ENCODE measurements at regions of chr6 and their contacts with region 1.

Region 1: GRCh38 chr6:116279260-116280063 is at the start of gene TSPYL1:
- DNase-seq: peak; percentile 90 to 97 (median 92)
- ATAC-seq: peak; percentile 85
- H3K4me3 ChIP-seq: peak within 1 kb of the TSS; percentile 93
- H3K27ac ChIP-seq: peak within 1 kb of the TSS; percentile 95
- H3K4me1 ChIP-seq: peaks cover 9 to 20% of the 10 kb centered on the region in 2 experiments; a peak in 3 of 5 replicates
- H3K27me3 ChIP-seq: no peaks in the 10 kb centered on the region
- CTCF ChIP-seq: peak in 1 of 3 experiments; percentile 27; a peak in 2 of 6 replicates
- EP300 ChIP-seq: no peak; the same call in 1 of the 2 replicates
- POLR2A ChIP-seq: peak; percentile 95
- RAD21 ChIP-seq: no peak
- polyA plus RNA-seq, gene TSPYL1: 26.1 to 37.9 TPM

Region 2: GRCh38 chr6:116115781-116116180 is 163.7 kb before region 1 on chr6:
- CTCF ChIA-PET with region 1: no interaction called
- POLR2A ChIA-PET with region 1: no interaction called
- in situ Hi-C with region 1: no loop called
- intact Hi-C with region 1: loop called (anchors 5 kb)
- DNase-seq: peak in 1 of 4 experiments; percentile 9
- ATAC-seq: no peak
- H3K4me3 ChIP-seq: no peak overlapping the region
- H3K27ac ChIP-seq: no peak overlapping the region
- H3K4me1 ChIP-seq: no peaks in the 10 kb centered on the region
- H3K27me3 ChIP-seq: no peaks in the 10 kb centered on the region
- CTCF ChIP-seq: peak in 2 of 3 experiments; percentile 9 to 53; a peak in 3 of 6 replicates
- EP300 ChIP-seq: no peak
- POLR2A ChIP-seq: no peak
- RAD21 ChIP-seq: no peak

Region 3: DNA sequence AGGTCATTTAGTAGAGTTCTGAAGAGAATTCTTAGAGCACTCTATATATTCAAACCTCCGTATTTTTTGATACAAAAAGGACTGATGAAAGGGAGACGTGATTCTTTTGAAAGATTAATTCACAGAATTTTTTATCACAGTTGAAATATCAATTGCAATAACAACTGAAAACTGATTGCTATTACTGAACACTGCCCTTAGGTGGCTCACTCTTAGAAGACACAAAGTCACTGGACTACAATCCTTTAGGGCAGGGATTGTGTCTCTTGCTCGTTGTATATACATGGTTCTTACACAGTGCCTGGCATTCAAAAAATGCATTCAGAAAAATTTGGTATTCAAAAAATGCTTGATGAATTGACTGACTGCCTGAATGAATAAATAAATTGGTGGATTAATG is 164.6 kb after region 1 on chr6:
- CTCF ChIA-PET with region 1: no interaction called
- POLR2A ChIA-PET with region 1: no interaction called
- in situ Hi-C with region 1: no loop called
- intact Hi-C with region 1: loop called (anchors 5 kb)
- DNase-seq: peak; percentile 24 to 45 (median 34)
- ATAC-seq: peak; percentile 86
- H3K4me3 ChIP-seq: no peak overlapping the region
- H3K27ac ChIP-seq: no peak overlapping the region
- H3K4me1 ChIP-seq: no peaks in the 10 kb centered on the region; a peak in 1 of 5 replicates
- H3K27me3 ChIP-seq: no peaks in the 10 kb centered on the region
- CTCF ChIP-seq: peak; percentile 43 to 65 (median 46); a peak in 5 of 6 replicates
- EP300 ChIP-seq: no peak
- POLR2A ChIP-seq: no peak
- RAD21 ChIP-seq: peak; percentile 50 to 71

Region 4: GRCh38 chr6:116561377-116562018 is 282.0 kb after region 1 on chr6:
- CTCF ChIA-PET with region 1: no interaction called
- POLR2A ChIA-PET with region 1: no interaction called
- in situ Hi-C with region 1: loop called (anchors 10 kb)
- intact Hi-C with region 1: no loop called
- DNase-seq: peak; percentile 62 to 84 (median 67)
- ATAC-seq: peak; percentile 82
- H3K4me3 ChIP-seq: no peak overlapping the region
- H3K27ac ChIP-seq: no peak overlapping the region
- H3K4me1 ChIP-seq: peaks cover 15 to 17% of the 10 kb centered on the region in 2 experiments; a peak in 4 of 5 replicates
- H3K27me3 ChIP-seq: no peaks in the 10 kb centered on the region
- CTCF ChIP-seq: peak; percentile 76 to 88 (median 84)
- EP300 ChIP-seq: no peak
- POLR2A ChIP-seq: no peak
- RAD21 ChIP-seq: peak; percentile 81 to 85

Region 5: DNA sequence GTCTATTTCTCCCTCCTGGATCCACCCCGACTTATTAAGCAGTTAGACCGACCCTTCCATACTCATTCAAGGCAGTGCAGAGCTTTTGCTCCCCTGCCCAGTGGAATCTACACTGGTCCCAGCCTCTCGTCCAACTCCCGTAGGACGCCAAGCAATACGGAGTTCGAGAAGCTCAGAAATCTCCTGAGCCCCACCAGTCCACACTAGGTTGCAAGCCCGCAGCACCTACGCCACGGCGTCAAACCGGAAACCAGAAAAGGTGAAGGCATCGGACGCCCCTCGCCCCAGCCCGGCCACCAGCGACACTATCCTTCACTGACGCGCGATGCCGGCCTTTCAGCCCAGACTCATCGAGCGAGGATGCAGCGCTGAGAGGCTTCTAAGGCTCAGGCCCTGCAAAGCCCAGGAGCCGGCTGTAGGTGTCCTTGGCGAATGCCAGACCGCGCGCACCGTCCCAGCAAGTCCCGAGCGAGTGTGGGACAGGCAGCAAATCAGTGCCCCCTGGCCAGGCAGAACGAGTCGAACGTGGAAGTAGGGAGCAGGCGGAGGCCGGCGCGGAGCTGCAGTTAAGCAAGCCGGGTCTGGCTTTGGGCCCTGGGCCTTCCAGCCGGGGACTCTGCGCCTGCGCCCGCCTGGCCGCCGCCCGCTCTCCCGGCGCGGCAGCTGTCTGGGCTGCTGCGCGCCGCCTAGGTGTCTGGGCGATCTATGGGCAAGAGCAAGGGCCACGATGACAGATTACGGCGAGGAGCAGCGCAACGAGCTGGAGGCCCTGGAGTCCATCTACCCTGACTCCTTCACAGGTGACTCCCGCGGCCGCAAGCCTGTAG is 291.6 kb after region 1 on chr6 and contains the start of gene RWDD1:
- CTCF ChIA-PET with region 1: no interaction called
- POLR2A ChIA-PET with region 1: interaction called, 4 read pairs
- in situ Hi-C with region 1: no loop called
- intact Hi-C with region 1: loop called (anchors 2 kb)
- DNase-seq: peak; percentile 91 to 99 (median 94)
- ATAC-seq: peak; percentile 95
- H3K4me3 ChIP-seq: peak within 1 kb of the TSS; percentile 82
- H3K27ac ChIP-seq: peak within 1 kb of the TSS; percentile 83
- H3K4me1 ChIP-seq: peaks cover 0 to 22% of the 10 kb centered on the region in 2 experiments; a peak in 4 of 5 replicates
- H3K27me3 ChIP-seq: no peaks in the 10 kb centered on the region
- CTCF ChIP-seq: peak; percentile 6 to 26 (median 13); a peak in 1 of 6 replicates
- EP300 ChIP-seq: no peak
- POLR2A ChIP-seq: peak; percentile 95
- RAD21 ChIP-seq: no peak; a peak in 2 of 4 replicates
- polyA plus RNA-seq, gene RWDD1: 48.7 to 53.2 TPM

Region 6: DNA sequence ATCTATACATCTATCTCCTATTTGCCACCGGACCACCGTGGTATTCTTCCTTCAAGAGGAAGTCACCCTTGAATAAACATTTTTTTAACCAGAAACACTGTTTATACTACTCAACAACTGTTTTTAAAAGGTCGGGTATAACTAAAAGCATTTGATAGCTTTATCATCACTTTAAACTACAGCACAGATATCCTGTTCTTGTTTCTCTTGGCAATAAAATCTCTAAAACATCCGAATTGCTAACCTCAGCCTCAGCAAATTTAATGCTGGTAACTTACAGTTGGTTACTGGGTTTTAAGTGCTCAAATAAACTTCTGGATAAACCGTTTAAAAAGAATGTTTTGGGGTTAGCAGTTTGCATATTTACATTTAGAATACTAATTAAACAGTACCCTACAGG is 368.7 kb after region 1 on chr6:
- CTCF ChIA-PET with region 1: no interaction called
- POLR2A ChIA-PET with region 1: no interaction called
- in situ Hi-C with region 1: no loop called
- intact Hi-C with region 1: loop called (anchors 5 kb)
- DNase-seq: no peak
- ATAC-seq: no peak
- H3K4me3 ChIP-seq: no peak overlapping the region
- H3K27ac ChIP-seq: no peak overlapping the region
- H3K4me1 ChIP-seq: no peaks in the 10 kb centered on the region
- H3K27me3 ChIP-seq: no peaks in the 10 kb centered on the region
- CTCF ChIP-seq: no peak
- EP300 ChIP-seq: no peak
- POLR2A ChIP-seq: no peak
- RAD21 ChIP-seq: no peak

Region 7: GRCh38 chr6:116667623-116668022 is 388.2 kb after region 1 on chr6:
- CTCF ChIA-PET with region 1: no interaction called
- POLR2A ChIA-PET with region 1: no interaction called
- in situ Hi-C with region 1: no loop called
- intact Hi-C with region 1: loop called (anchors 2 kb)
- DNase-seq: peak in 1 of 4 experiments; percentile 35
- ATAC-seq: peak; percentile 23
- H3K4me3 ChIP-seq: peak overlapping the region; percentile 62
- H3K27ac ChIP-seq: peak overlapping the region; percentile 83
- H3K4me1 ChIP-seq: peaks cover 0 to under 1% of the 10 kb centered on the region in 2 experiments; a peak in 3 of 5 replicates
- H3K27me3 ChIP-seq: no peaks in the 10 kb centered on the region
- CTCF ChIP-seq: no peak
- EP300 ChIP-seq: no peak
- POLR2A ChIP-seq: no peak
- RAD21 ChIP-seq: no peak

Measured in K562 (cell line).